HCT116 (cell line): ENCODE measurements at regions of chr11 and their contacts with region 1.

Region 1: DNA sequence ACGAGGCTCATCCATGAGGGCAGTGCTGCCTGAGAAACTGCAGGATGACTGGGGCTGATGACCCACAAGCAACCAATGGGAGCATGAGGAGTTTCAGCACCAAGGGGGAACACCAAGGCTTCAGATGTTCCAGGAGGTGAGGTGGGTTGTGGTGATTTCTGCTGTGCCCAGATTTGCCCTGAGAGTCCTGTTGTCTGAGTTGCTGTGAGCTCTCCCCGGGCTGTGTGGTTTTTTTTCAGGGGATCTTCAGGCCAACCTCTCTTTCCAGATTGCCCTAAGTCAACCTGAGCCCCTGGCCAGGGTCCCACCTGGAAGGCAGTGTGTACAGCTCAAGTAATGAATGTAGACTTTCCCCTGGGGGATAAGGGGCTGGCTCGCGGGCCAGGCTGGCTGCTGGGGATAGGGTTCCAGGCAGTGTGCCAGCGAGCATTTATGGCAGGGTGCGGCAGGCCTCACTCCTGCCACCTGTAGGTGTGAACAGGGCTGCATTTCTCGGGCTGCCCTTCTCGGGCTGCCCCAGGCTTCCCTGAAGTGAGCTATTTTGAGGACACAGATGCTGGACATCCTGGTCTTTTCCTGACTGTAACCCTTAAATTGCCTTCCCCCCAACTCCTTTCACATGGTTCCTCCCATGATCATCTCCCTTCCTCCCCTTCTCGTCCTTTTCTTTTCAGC is 9.8 kb downstream of the SLC22A6 start:
- DNase-seq: peak; percentile 36
- ATAC-seq: peak; percentile 94
- H3K4me3 ChIP-seq: no peak overlapping the region
- H3K27ac ChIP-seq: no peak overlapping the region
- H3K4me1 ChIP-seq: peaks cover 7 to 16% of the 10 kb centered on the region in 2 experiments; a peak in 3 of 4 replicates
- H3K27me3 ChIP-seq: no peaks in the 10 kb centered on the region
- CTCF ChIP-seq: peak; percentile 44 to 82 (median 73); a peak in 5 of 6 replicates
- POLR2A ChIP-seq: no peak
- RAD21 ChIP-seq: peak; percentile 44

Region 2: DNA sequence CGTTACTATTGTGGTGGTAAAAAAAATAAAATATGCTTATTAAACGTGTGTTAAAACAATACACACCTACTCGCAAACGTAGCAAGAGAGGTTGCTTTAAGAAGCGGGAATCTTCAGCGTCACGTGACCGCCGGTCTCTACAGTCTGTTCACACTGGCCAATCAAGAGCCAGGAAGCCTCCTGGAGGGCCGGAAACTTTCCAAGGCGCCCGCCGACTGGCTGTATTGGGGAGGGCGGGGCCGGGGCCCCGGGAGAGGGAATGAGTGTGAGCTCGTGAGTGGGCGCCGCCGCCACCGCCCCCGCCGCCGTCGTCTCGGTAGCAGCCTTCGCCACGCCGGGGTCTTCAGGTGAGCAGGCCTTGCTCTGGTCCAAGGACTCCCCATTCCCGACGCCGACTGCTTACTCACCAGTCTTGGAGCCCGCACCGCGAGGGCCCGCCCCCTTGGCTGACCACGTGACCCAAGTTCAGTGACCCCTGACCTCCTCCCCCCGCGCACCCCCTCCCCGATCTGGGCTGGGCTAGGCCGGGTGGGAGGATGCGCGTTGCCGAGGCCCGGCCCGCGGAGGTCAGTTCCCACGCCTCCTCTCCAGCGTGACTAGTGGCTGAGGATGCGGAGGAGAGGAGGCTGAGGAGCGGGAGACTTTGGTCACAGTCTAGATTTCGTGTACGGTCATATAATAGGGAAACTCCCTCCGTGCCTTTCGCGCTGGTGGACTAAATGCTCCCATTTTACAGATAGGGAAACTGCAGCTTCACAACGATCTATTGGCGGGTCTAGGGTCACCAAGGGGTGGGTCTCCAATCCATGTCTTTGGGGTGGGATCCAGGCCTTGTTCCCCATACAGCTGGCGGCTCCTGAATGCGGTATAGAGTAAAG is 203.6 kb before region 1 on chr11 and contains the start of gene TAF6L:
- CTCF ChIA-PET with region 1: no interaction called
- POLR2A ChIA-PET with region 1: no interaction called
- RAD21 ChIA-PET with region 1: no interaction called
- intact Hi-C with region 1: no loop called
- DNase-seq: peak; percentile 93
- ATAC-seq: peak; percentile 94
- H3K4me3 ChIP-seq: peak within 1 kb of the TSS; percentile 67 to 69
- H3K27ac ChIP-seq: peak within 1 kb of the TSS; percentile 74
- H3K4me1 ChIP-seq: peaks cover 7 to 24% of the 10 kb centered on the region in 2 experiments; a peak in 3 of 4 replicates
- H3K27me3 ChIP-seq: no peaks in the 10 kb centered on the region
- CTCF ChIP-seq: no peak
- POLR2A ChIP-seq: peak; percentile 7
- RAD21 ChIP-seq: no peak
- total RNA-seq, gene TAF6L: 24.2 TPM

Region 3: DNA sequence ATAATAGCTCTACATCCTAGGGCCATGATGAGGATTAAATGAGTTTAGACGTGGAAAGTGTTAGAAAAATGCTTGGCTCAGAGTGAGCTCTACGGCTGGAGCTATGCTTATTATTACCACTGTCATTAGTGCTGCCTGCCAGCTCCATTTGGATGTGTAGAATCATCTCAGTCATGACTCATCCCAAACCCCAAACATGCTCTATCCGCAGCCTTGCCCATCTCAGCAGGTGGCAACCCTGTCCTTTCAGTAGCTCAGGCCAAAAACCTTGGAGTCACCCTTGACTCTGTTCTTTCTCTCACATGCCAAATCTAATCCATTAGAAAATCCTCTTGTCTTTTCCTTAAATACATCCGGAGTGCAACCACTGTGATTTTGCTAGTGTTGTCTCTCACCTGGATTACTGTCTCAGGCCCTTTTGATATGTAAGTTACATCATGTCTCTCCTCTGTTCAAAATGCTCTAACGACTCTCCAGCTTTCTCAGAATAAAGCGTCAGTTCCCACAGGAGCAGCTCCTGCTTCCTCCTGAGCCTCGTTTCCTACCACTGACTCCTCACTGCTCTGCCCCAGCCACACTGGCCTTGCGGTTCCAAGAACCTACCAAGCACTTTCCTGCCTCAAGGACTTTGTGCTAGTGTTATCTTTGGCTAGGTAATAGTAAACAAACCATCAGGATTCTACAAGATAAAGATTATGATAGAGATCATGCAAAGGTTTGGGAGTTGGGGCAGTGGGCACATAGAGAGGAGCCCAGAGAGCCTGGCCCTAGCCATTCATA is 43.3 kb before region 1 on chr11:
- CTCF ChIA-PET with region 1: interaction called, 4 read pairs
- POLR2A ChIA-PET with region 1: no interaction called
- RAD21 ChIA-PET with region 1: no interaction called
- intact Hi-C with region 1: loop called (anchors 5 kb)
- DNase-seq: no peak
- ATAC-seq: peak; percentile 82
- H3K4me3 ChIP-seq: no peak overlapping the region
- H3K27ac ChIP-seq: no peak overlapping the region
- H3K4me1 ChIP-seq: peaks cover 12 to 16% of the 10 kb centered on the region in 2 experiments
- H3K27me3 ChIP-seq: no peaks in the 10 kb centered on the region
- CTCF ChIP-seq: no peak
- POLR2A ChIP-seq: no peak
- RAD21 ChIP-seq: no peak

Region 4: GRCh38 chr11:63155794-63156193 is 180.8 kb after region 1 on chr11:
- CTCF ChIA-PET with region 1: no interaction called
- POLR2A ChIA-PET with region 1: no interaction called
- RAD21 ChIA-PET with region 1: no interaction called
- intact Hi-C with region 1: no loop called
- DNase-seq: no peak
- ATAC-seq: no peak
- H3K4me3 ChIP-seq: no peak overlapping the region
- H3K27ac ChIP-seq: no peak overlapping the region
- H3K4me1 ChIP-seq: no peaks in the 10 kb centered on the region
- H3K27me3 ChIP-seq: peaks cover 25% of the 10 kb centered on the region; the same call in 1 of the 2 replicates
- CTCF ChIP-seq: no peak
- POLR2A ChIP-seq: no peak
- RAD21 ChIP-seq: no peak

Region 5: DNA sequence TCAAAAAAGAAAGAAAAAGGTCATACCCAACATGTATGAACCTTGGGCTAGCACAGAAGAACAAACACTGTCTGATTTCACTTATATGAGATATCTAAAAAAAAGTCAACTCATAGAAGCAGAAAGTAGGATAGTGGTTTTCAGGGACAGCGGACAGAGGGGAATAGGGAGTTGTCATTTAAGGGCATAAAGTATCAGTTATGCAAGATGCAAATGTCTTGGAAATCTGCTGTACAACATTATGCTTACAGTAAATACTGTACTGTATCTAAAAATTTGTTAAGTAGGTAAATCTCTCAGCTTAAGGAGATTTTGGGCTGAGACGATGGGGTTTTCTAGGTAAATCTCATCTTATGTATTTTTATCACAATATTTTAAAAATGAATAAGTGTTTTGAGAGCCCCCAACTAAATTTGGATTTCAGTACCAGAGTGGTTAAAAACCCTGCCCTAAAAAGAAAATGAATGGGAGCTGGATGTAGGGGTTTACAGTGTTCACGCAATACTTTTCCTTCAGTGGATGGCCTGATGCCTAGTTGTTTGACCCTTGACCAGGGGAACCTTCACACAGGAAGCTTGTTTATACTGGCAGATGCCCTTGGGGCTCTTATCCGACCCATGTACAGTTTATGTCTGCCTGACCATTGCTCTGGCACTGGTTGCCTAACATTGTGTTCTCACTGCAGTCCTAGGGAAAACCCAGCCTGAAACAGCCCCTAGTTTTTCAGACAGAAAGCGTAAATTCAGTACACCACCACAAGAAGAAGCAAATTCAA is 429.4 kb after region 1 on chr11:
- CTCF ChIA-PET with region 1: no interaction called
- POLR2A ChIA-PET with region 1: no interaction called
- RAD21 ChIA-PET with region 1: no interaction called
- intact Hi-C with region 1: no loop called
- DNase-seq: no peak
- ATAC-seq: no peak
- H3K4me3 ChIP-seq: no peak overlapping the region
- H3K27ac ChIP-seq: no peak overlapping the region
- H3K4me1 ChIP-seq: no peaks in the 10 kb centered on the region
- H3K27me3 ChIP-seq: peaks cover 18% of the 10 kb centered on the region
- CTCF ChIP-seq: no peak
- POLR2A ChIP-seq: no peak
- RAD21 ChIP-seq: no peak